MCF 10A (cell line): ENCODE measurements at regions of chr1 and their contacts with region 1.

Region 1: DNA sequence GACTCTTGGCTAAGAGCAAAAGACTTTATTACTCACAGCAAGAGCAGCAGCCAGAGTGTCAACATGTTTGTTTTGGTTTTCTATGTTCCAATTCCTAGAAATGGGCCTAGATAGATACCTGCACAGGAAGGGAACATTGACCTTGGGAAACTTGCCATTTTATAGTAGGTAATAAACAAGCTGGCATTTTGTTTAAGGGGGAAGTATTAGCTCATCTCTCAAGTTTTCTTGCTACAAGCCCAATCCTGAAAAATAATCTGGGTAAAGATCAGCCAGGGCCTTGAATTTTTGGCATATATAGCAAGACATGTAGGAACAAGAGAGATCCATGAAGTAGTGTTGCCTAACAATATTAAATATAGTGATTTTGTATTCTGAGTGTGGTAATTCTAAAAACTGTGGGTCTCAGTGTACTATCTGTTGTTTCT is 51.4 kb upstream of the RGL1 start:
- DNase-seq: peak; percentile 83
- H3K4me3 Mint-ChIP-seq: no peak overlapping the region
- H3K27ac Mint-ChIP-seq: peak overlapping the region; percentile 73
- H3K4me1 Mint-ChIP-seq: peaks cover 29% of the 10 kb centered on the region
- H3K27me3 Mint-ChIP-seq: no peaks in the 10 kb centered on the region
- CTCF ChIP-seq: no peak

Region 2: DNA sequence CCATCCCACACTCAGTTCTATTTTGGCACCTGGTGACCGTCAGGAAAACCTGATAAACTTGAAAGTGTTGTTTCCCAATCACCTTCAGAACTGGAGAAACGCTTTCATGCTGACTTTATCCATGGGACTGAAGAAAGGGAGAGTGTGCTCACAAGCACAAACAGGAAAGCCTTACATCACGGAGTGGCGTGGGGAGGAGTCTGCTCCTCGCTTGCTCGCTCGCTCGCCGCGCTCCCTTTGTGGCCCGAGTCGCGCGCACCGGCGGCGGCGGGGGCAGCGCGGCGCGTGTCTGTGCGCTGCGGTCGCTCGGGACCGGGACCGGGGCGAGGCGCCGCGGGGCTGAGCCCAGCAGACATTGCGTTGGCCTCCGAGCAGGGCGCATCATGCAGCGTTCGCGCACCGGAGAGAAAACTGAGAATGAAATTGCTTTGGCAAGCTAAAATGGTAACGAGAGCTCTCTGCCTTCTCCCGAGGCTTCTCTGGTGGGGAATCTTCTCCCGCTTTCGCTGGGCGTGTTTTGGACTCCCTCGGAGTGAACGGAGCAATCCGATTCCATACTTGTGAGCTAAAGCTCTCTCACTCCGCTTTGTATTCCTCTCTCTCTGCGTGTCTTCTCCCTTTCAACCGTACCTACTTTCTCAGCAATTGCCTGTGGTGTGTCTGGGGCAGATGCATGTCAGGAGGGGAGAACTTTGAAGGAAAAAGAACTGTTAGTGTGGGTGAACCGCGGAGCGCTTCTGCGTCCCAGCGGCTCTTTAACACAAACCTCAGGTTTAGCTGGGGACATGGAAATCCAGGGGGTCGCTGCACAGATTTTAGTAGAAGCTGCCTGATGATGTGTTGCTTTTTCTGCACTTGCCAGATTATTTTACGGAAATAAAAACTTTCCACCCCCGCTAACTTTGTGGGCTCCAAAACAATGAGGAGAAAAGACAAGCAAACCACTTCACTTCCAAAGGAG is 51.7 kb after region 1 on chr1 and contains the start of gene RGL1:
- CTCF ChIA-PET with region 1: no interaction called
- POLR2A ChIA-PET with region 1: interaction called, 11 read pairs
- intact Hi-C with region 1: no loop called
- DNase-seq: peak; percentile 73
- H3K4me3 Mint-ChIP-seq: peak within 1 kb of the TSS; percentile 84
- H3K27ac Mint-ChIP-seq: peak within 1 kb of the TSS; percentile 29
- H3K4me1 Mint-ChIP-seq: peaks cover 17% of the 10 kb centered on the region
- H3K27me3 Mint-ChIP-seq: no peaks in the 10 kb centered on the region
- CTCF ChIP-seq: no peak
- total RNA-seq, gene RGL1: 2.1 and 2.3 TPM in 2 replicates